Activated T-helper 2 cell treated with anti-CD3 and anti-CD28 coated beads, Interferon-gamma antibody, Interleukin-2, Interleukin-4, amounts not matched to agents 10 μg/mL and 5 μg/mL and 100 μg/mL, durations not matched to agents 14 hours and 24 hours and 36 hours (primary cell): ENCODE measurements at regions of chr22 and their contacts with region 1.

Region 1: GRCh38 chr22:31585161-31585859 is 76.7 kb downstream of the PISD start:
- DNase-seq: peak; percentile 20
- H3K4me3 Mint-ChIP-seq: peak overlapping the region; percentile 20
- H3K27ac Mint-ChIP-seq: peak overlapping the region; percentile 81
- H3K4me1 Mint-ChIP-seq: peaks cover 51% of the 10 kb centered on the region
- H3K27me3 Mint-ChIP-seq: no peaks in the 10 kb centered on the region

Region 2: DNA sequence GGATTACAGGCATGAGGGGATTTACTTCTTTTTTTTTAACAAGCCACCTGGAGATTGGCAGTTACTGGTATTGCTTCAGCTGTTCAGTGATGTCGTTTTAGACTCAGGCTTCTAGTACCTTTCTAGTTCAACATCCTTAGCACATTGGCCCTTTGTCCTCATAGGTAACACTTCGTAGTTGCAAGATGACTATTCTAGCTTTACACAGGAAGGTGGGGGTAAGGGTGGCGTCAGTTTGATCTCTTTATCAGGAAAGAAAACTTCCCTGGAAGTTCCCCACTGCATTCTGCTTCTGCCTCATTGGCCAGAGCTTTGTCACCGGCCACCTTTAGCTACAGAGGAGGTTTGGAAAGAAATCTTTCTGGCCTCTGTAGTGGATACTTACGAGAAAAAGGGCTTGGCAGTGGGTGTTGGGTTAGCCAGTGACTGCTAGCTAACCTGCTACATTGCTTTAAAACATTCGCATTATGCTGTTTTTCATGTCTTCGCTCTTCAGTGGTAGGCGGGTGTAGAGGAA is 48.2 kb before region 1 on chr22:
- intact Hi-C with region 1: loop called (anchors 1 kb)
- DNase-seq: peak; percentile 26
- H3K4me3 Mint-ChIP-seq: peak overlapping the region; percentile 64
- H3K27ac Mint-ChIP-seq: peak overlapping the region; percentile 99
- H3K4me1 Mint-ChIP-seq: peaks cover 60% of the 10 kb centered on the region
- H3K27me3 Mint-ChIP-seq: no peaks in the 10 kb centered on the region

Region 3: DNA sequence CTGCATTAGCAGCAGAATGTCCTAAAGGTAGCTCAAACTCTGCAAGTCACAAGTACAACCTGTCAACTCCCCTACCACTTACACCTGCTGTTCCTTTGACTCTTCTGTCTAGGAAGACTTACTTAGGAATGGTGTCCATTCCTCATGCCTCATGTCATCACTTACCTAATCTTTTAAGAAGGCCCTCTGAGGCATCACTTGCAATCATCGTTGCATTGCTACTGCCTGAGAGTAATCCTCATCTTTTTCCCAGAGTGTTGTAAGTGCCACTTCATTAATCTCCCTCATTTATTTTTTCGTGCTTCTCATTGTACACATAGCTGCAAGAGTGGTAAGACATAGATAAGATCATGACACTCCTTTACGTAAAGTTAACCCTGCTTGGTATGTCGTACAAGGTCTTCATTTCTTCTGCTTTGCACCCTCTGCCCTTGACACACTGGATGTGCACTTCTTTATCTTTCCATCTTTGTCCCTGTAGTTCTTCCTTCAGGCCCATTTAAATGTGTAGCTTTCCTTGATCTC is 34.4 kb before region 1 on chr22:
- intact Hi-C with region 1: no loop called
- DNase-seq: no peak
- H3K4me3 Mint-ChIP-seq: no peak overlapping the region
- H3K27ac Mint-ChIP-seq: peak overlapping the region; percentile 63
- H3K4me1 Mint-ChIP-seq: peaks cover 28% of the 10 kb centered on the region
- H3K27me3 Mint-ChIP-seq: no peaks in the 10 kb centered on the region